ENCODE measurements at regions of chr9 and their contacts with region 1.

Region 1: GRCh38 chr9:105157130-105157583 is 87.3 kb upstream of the SLC44A1 start:
- DNase-seq: peak; percentile 71 to 89 (median 82)
- H3K4me3 ChIP-seq: no peak overlapping the region
- H3K4me3 Mint-ChIP-seq: no peak overlapping the region
- H3K27ac ChIP-seq: no peak overlapping the region
- H3K27ac Mint-ChIP-seq: peak overlapping the region in 6 of 7 donors; percentile 11 to 83 (median 48)
- H3K4me1 ChIP-seq: peaks cover 18 to 29% of the 10 kb centered on the region in 2 donors
- H3K4me1 Mint-ChIP-seq: peaks cover 21% of the 10 kb centered on the region
- H3K27me3 ChIP-seq: no peaks in the 10 kb centered on the region
- H3K27me3 Mint-ChIP-seq: peaks cover 0 to 2% (median 2%) of the 10 kb centered on the region in 3 donors
- CTCF ChIP-seq: peak; percentile 62

Region 2: DNA sequence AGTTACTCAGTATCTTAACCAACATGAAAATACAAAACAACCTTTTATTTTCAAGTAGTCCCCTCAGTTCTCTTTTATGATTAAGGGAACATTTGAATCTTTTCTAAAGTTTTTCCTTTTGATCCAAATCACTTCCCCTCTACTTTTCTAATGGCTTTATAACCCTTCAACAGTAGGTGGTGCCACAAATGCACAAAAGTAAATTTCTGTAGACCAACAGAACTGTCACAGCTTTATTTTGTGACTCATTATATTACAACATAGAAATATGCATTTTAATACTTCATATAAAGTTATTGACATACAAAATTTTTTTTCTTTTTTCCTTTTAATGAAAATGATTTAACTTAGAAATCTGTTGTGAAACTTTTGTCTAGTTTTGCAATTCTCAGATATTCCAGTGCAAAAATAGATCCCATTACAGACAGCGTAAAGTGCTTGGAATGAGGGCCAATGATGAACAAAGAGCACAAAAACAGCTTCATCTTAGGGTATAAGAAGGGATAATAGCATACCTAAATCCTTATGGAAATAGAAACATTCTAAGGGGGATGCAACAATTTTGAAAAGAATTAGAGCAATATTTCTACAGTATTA is 376.3 kb before region 1 on chr9:
- intact Hi-C with region 1: loop called (anchors 10 kb)
- DNase-seq: peak; percentile 54 to 79 (median 72)
- H3K4me3 ChIP-seq: no peak overlapping the region
- H3K4me3 Mint-ChIP-seq: peak overlapping the region in 1 of 2 donors; percentile 39
- H3K27ac ChIP-seq: peak overlapping the region in 1 of 2 donors; percentile 74
- H3K27ac Mint-ChIP-seq: peak overlapping the region; percentile 77 to 91 (median 88)
- H3K4me1 ChIP-seq: peaks cover 34 to 45% of the 10 kb centered on the region in 2 donors
- H3K4me1 Mint-ChIP-seq: peaks cover 22% of the 10 kb centered on the region
- H3K27me3 ChIP-seq: no peaks in the 10 kb centered on the region
- H3K27me3 Mint-ChIP-seq: no peaks in the 10 kb centered on the region
- CTCF ChIP-seq: peak; percentile 81

Region 3: DNA sequence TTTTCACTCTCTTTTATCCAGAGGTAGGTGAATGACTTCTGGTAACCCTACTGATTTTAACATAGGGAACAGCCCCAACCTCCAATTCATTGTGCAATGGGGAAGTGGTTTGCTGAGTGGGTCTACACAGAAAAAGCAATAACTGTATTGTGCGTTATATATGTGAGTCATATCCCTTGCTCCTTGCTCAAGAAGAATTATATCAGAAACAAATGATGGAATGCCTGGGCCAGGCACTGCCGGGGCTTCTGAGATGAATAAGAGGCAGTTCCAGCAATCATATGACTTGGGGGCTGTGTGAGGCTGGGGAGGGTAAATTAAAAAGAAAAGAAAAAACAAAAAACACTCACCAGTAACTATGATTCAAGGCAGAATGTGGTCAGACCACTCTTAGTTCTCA is 150.0 kb before region 1 on chr9:
- intact Hi-C with region 1: loop called in 1 of 2 experiments (anchors 5 kb)
- DNase-seq: peak; percentile 92 to 97 (median 97)
- H3K4me3 ChIP-seq: peak overlapping the region in 1 of 3 experiments; percentile 43
- H3K4me3 Mint-ChIP-seq: peak overlapping the region; percentile 54 to 79
- H3K27ac ChIP-seq: peak overlapping the region; percentile 70 to 75
- H3K27ac Mint-ChIP-seq: peak overlapping the region; percentile 92 to 97 (median 95)
- H3K4me1 ChIP-seq: peaks cover 49 to 58% of the 10 kb centered on the region in 2 donors
- H3K4me1 Mint-ChIP-seq: peaks cover 47% of the 10 kb centered on the region
- H3K27me3 ChIP-seq: no peaks in the 10 kb centered on the region
- H3K27me3 Mint-ChIP-seq: peaks cover 0 to 6% (median 3%) of the 10 kb centered on the region in 3 donors
- CTCF ChIP-seq: no peak

Region 4: DNA sequence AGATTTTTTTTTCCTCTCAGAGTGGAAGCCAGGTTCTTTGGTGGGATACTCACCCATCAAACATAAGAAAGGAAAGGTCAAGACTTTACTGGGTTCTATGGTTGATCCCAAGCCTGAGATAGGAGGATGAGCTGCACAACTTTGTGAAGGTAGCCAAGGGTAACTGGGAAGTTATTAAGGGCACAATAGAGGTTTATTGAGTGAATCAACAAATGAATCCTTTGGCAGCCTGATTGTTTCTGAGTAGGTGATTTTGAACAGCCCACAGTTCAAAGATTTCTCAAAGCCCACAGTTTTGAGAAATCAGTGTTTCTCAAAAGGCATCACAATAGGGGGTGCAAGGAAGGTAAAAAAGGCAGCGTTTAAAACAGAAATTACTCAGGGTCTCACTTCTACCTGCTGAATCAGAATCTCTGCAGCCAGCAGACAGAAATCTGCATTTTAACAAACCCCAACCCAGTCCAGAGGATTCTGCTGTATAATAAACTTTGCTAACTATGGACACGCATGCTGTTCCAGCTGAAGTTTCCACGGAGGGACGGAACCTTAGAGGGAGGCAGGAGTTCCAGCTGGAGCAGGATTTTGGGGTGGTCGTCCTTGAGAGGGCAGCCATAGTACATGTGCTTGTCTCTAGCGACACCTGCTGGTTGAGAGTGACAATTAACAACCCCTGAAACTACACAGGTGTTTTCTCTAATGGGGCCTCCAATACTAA is 257.9 kb after region 1 on chr9:
- intact Hi-C with region 1: loop called (anchors 2 to 5 kb)
- DNase-seq: peak; percentile 25 to 56 (median 55)
- H3K4me3 ChIP-seq: no peak overlapping the region
- H3K4me3 Mint-ChIP-seq: no peak overlapping the region
- H3K27ac ChIP-seq: no peak overlapping the region
- H3K27ac Mint-ChIP-seq: peak overlapping the region in 2 of 7 donors; percentile 9 to 52
- H3K4me1 ChIP-seq: peaks cover 13 to 15% of the 10 kb centered on the region in 2 donors
- H3K4me1 Mint-ChIP-seq: peaks cover 19% of the 10 kb centered on the region
- H3K27me3 ChIP-seq: no peaks in the 10 kb centered on the region
- H3K27me3 Mint-ChIP-seq: peaks cover 0 to 2% (median 0%) of the 10 kb centered on the region in 3 donors
- CTCF ChIP-seq: peak; percentile 96

Measured in CD14-positive monocyte (primary cell).